Dorsolateral prefrontal cortex (tissue), 120 donors: ENCODE measurements at regions of chr3 and their contacts with region 1.

Region 1: GRCh38 chr3:53845103-53845880 is 927 bp downstream of the CHDH start:
- DNase-seq: peak in 7 of 10 donors; percentile 37 to 68 (median 62)
- H3K4me3 ChIP-seq: peak overlapping the region; percentile 48 to 84 (median 74)
- H3K27ac ChIP-seq: peak overlapping the region in 58 of 59 donors; percentile 8 to 100 (median 92)
- H3K27me3 ChIP-seq: peaks cover 0 to 16% (median 0%) of the 10 kb centered on the region in 45 donors
- CTCF ChIP-seq: peak in 36 of 56 donors; percentile 8 to 40 (median 27)

Region 2: GRCh38 chr3:53293867-53294266 is 551.4 kb before region 1 on chr3:
- intact Hi-C with region 1: no loop called
- DNase-seq: no peak
- H3K4me3 ChIP-seq: no peak overlapping the region
- H3K27ac ChIP-seq: peak overlapping the region in 4 of 59 donors; percentile 14 to 43 (median 24)
- H3K27me3 ChIP-seq: no peaks in the 10 kb centered on the region
- CTCF ChIP-seq: no peak

Region 3: GRCh38 chr3:53795789-53796560 is 49.3 kb before region 1 on chr3:
- intact Hi-C with region 1: loop called in 1 of 2 experiments (anchors 10 kb)
- DNase-seq: peak; percentile 54 to 92 (median 75)
- H3K4me3 ChIP-seq: peak overlapping the region in 21 of 59 donors; percentile 2 to 43 (median 17)
- H3K27ac ChIP-seq: peak overlapping the region in 8 of 59 donors; percentile 5 to 45 (median 30)
- H3K27me3 ChIP-seq: no peaks in the 10 kb centered on the region
- CTCF ChIP-seq: no peak

Region 4: DNA sequence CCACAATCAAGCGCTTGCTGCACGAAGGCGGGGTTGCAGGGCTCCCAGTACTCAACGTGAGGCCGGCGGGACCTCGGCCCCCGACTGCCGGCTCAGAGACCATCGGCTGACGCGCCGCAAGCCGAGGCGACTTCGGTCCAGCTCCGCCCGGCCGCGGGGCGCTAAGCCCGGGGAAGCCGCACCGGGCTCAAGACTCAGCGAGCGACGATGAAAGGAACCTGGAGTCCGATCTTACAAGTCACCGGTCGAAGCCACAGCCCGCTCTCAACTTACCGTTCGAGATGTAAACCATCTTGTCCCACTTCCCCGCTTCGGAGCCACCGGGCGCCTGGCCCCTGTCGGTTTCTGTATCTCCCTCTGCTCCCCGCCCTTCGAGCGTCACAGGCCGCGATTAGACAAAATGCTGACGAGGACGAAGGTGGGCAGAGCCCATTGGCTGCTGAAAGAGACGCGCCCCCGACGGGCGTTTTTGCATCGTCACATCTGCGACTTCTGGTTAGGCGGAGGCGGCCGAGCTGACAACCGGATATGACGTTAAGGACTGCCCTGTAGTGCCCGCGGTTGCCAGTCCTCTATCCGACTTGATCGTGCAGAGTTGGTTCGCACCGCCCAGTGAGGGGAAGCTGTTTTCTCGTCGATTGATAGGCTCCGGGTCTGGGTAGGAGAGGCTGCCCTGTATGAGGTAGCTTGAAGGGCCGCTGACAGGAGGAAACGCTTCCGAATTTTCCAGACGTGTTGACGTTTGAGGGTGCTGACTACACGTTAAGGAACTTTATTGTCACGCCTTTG is 46.4 kb after region 1 on chr3 and contains the start of gene SELENOK:
- intact Hi-C with region 1: loop called in 1 of 2 experiments (anchors 2 kb)
- DNase-seq: peak; percentile 97 to 100 (median 99)
- H3K4me3 ChIP-seq: peak within 1 kb of the TSS; percentile 62 to 100 (median 93)
- H3K27ac ChIP-seq: peak within 1 kb of the TSS; percentile 70 to 99 (median 92)
- H3K27me3 ChIP-seq: peaks cover 0 to 9% (median 0%) of the 10 kb centered on the region in 45 donors
- CTCF ChIP-seq: peak in 27 of 56 donors; percentile 4 to 59 (median 24)
- total RNA-seq, gene SELENOK: 24.0 to 95.9 (median 41.2) TPM